Heart left ventricle (tissue), 16 donors: ENCODE measurements at regions of chr2 and their contacts with region 1.

Region 1: DNA sequence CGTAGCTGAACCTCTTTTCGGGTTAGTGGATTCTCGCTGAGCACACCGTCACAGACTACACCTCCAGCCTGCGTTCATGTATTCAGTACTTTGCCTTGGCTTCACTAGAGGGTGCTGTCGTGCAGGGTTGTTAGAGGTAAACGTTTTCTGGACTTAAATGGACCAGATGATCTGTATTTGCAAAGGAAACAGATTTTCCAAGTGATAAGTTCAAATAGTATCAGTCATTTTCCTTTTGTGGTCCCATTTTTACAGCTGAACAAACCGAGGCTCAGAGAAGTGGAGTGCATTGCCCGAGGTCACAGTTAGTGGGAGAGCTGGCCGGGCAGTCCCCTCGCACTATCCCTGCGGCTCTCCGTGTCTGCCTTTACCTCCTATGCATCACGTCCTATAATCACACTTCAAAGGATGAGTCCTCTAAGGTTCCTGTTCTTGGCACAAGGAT is 125.9 kb downstream of the MAP4K4 start:
- DNase-seq: peak in 4 of 5 donors; percentile 55 to 64 (median 58)
- ATAC-seq: peak in 3 of 4 donors; percentile 59 to 77 (median 66)
- H3K4me3 ChIP-seq: no peak overlapping the region
- H3K27ac ChIP-seq: peak overlapping the region in 2 of 12 donors; percentile 8 to 15
- H3K4me1 ChIP-seq: peaks cover 12 to 82% (median 60%) of the 10 kb centered on the region in 12 donors
- H3K27me3 ChIP-seq: no peaks in the 10 kb centered on the region
- CTCF ChIP-seq: peak; percentile 47 to 74 (median 61)
- POLR2A ChIP-seq: no peak

Region 2: GRCh38 chr2:101638181-101638711 is 185.1 kb before region 1 on chr2:
- intact Hi-C with region 1: no loop called
- DNase-seq: no peak
- ATAC-seq: no peak
- H3K4me3 ChIP-seq: no peak overlapping the region
- H3K27ac ChIP-seq: no peak overlapping the region
- H3K4me1 ChIP-seq: no peaks in the 10 kb centered on the region
- H3K27me3 ChIP-seq: peaks cover 0 to 8% (median 0%) of the 10 kb centered on the region in 9 donors
- CTCF ChIP-seq: no peak
- POLR2A ChIP-seq: no peak

Region 3: GRCh38 chr2:101770726-101771125 is 52.6 kb before region 1 on chr2:
- intact Hi-C with region 1: loop called in 6 of 10 experiments (anchors 2 to 10 kb)
- DNase-seq: no peak
- ATAC-seq: peak; percentile 11 to 44 (median 40)
- H3K4me3 ChIP-seq: no peak overlapping the region
- H3K27ac ChIP-seq: peak overlapping the region in 5 of 12 donors; percentile 2 to 14 (median 4)
- H3K4me1 ChIP-seq: peaks cover 8 to 100% (median 88%) of the 10 kb centered on the region in 12 donors
- H3K27me3 ChIP-seq: no peaks in the 10 kb centered on the region
- CTCF ChIP-seq: peak in 9 of 12 donors; percentile 33 to 55 (median 39)
- POLR2A ChIP-seq: no peak

Region 4: GRCh38 chr2:101776172-101777043 is 47.0 kb before region 1 on chr2:
- intact Hi-C with region 1: loop called in 6 of 10 experiments (anchors 2 to 10 kb)
- DNase-seq: peak in 1 of 5 donors; percentile 39
- ATAC-seq: peak in 3 of 4 donors; percentile 54 to 68 (median 58)
- H3K4me3 ChIP-seq: no peak overlapping the region
- H3K27ac ChIP-seq: no peak overlapping the region
- H3K4me1 ChIP-seq: peaks cover 2 to 100% (median 86%) of the 10 kb centered on the region in 12 donors
- H3K27me3 ChIP-seq: no peaks in the 10 kb centered on the region
- CTCF ChIP-seq: peak in 8 of 12 donors; percentile 11 to 51 (median 28)
- POLR2A ChIP-seq: no peak

Region 5: DNA sequence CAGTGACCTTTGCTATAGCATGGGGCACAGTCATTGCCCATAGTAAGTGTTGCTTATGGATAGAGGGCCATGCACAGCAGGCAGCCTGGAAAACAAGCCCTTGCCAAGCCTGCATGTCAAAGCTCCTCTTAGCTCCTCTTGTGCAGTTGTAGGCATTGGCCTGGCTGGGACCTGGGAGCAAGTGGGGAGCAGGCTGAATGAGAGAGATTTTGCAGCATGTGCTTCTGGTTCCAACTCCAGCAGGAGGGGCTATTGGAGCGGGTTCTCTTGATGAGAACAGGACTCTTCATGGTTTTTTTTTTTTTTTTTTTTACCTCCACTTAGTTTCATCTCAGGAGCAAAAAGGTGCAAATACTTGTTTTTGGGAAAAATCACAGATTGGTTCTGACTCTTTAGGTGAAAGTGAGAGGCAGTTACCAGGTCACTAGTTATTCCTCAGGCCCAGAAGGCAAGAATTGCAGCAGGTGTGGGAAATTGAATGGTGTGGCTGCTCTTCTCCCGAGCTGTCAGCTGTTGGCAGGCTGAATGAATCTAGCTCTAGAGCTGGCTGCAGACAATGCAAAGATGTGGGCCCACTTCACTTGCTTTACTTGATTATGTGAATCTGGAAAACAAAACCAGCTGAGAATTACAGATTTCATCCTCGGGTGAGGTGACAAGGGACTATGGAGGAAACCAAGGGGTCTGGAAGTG is 29.9 kb before region 1 on chr2:
- intact Hi-C with region 1: loop called in 2 of 10 experiments (anchors 5 kb)
- DNase-seq: peak in 3 of 5 donors; percentile 37 to 62 (median 42)
- ATAC-seq: peak in 3 of 4 donors; percentile 25 to 57 (median 30)
- H3K4me3 ChIP-seq: no peak overlapping the region
- H3K27ac ChIP-seq: peak overlapping the region in 8 of 12 donors; percentile 2 to 66 (median 29)
- H3K4me1 ChIP-seq: peaks cover 2 to 100% (median 68%) of the 10 kb centered on the region in 12 donors
- H3K27me3 ChIP-seq: no peaks in the 10 kb centered on the region
- CTCF ChIP-seq: peak in 7 of 12 donors; percentile 11 to 57 (median 31)
- POLR2A ChIP-seq: no peak